ENCODE measurements at regions of chr2 and their contacts with region 1.

Region 1: GRCh38 chr2:72137498-72138010 is 10.1 kb downstream of the CYP26B1 start:
- DNase-seq: peak in 1 of 2 experiments; percentile 69
- H3K4me3 ChIP-seq: peak overlapping the region; percentile 18; the same call in 1 of the 2 replicates
- H3K27ac ChIP-seq: peak overlapping the region; percentile 69
- H3K4me1 ChIP-seq: peaks cover 34% of the 10 kb centered on the region
- H3K27me3 ChIP-seq: no peaks in the 10 kb centered on the region
- CTCF ChIP-seq: peak; percentile 100

Region 2: DNA sequence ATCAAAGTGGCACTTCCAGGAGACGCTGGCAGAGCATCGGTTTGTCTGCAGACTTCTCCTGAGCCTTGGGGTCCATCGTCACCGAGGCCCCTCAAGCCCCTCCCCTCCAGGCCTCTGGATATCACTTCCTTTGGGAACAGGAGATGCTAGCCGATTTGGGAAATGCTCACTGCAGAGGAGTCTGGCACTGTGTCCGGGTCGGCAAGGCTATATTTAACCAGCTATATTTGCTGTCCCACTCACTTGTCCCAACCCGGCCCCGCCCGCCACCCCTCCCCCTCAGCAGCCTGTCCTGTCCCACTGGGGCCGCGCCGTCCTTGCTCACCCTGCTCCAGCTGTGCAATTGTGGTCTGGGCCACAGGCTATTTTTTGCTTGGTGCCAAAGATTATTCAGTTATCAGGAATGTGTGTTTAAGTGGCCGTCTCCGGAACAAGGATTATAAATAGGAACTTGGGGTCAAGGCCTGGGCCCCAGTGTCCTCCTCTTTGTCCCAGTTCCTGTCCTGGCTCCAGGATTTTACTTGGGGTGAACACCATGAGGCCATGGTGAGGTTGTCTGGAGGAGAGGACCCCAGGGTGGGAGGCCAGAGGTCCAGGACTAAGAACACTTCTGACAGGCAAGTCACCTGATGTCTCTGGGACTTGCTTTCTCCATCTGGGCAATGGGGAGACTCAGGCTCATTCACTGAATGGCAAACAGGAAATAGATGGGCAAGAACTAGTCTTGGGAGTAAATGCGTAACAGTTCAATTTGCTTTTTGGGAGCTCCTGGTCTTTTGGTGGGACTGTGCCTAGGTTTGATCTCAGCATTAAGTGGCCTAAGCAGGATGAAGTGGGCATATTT is 420.6 kb before region 1 on chr2:
- CTCF ChIA-PET with region 1: no interaction called
- POLR2A ChIA-PET with region 1: no interaction called
- intact Hi-C with region 1: loop called (anchors 1 kb)
- DNase-seq: peak; percentile 71 to 95
- H3K4me3 ChIP-seq: no peak overlapping the region
- H3K27ac ChIP-seq: peak overlapping the region; percentile 33; the same call in 1 of the 2 replicates
- H3K4me1 ChIP-seq: peaks cover 62% of the 10 kb centered on the region
- H3K27me3 ChIP-seq: no peaks in the 10 kb centered on the region
- CTCF ChIP-seq: no peak

Region 3: GRCh38 chr2:71882949-71883472 is 254.5 kb before region 1 on chr2:
- CTCF ChIA-PET with region 1: no interaction called
- POLR2A ChIA-PET with region 1: no interaction called
- intact Hi-C with region 1: loop called (anchors 5 kb)
- DNase-seq: peak; percentile 57 to 77
- H3K4me3 ChIP-seq: no peak overlapping the region
- H3K27ac ChIP-seq: no peak overlapping the region
- H3K4me1 ChIP-seq: peaks cover 35% of the 10 kb centered on the region
- H3K27me3 ChIP-seq: no peaks in the 10 kb centered on the region; the same call in 1 of the 2 replicates
- CTCF ChIP-seq: no peak

Region 4: GRCh38 chr2:71995067-71995665 is 142.4 kb before region 1 on chr2:
- CTCF ChIA-PET with region 1: no interaction called
- POLR2A ChIA-PET with region 1: no interaction called
- intact Hi-C with region 1: loop called (anchors 5 kb)
- DNase-seq: peak in 1 of 2 experiments; percentile 41
- H3K4me3 ChIP-seq: no peak overlapping the region
- H3K27ac ChIP-seq: no peak overlapping the region
- H3K4me1 ChIP-seq: no peaks in the 10 kb centered on the region
- H3K27me3 ChIP-seq: no peaks in the 10 kb centered on the region
- CTCF ChIP-seq: peak; percentile 72

Region 5: GRCh38 chr2:73176881-73177644 is 1039.5 kb after region 1 on chr2:
- CTCF ChIA-PET with region 1: interaction called, 18 read pairs
- POLR2A ChIA-PET with region 1: no interaction called
- intact Hi-C with region 1: no loop called
- DNase-seq: peak; percentile 63 to 83
- H3K4me3 ChIP-seq: peak overlapping the region; percentile 61
- H3K27ac ChIP-seq: no peak overlapping the region
- H3K4me1 ChIP-seq: peaks cover 19% of the 10 kb centered on the region
- H3K27me3 ChIP-seq: peaks cover 55% of the 10 kb centered on the region
- CTCF ChIP-seq: peak; percentile 99